ENCODE measurements at regions of chr3 and their contacts with region 1.

Region 1: DNA sequence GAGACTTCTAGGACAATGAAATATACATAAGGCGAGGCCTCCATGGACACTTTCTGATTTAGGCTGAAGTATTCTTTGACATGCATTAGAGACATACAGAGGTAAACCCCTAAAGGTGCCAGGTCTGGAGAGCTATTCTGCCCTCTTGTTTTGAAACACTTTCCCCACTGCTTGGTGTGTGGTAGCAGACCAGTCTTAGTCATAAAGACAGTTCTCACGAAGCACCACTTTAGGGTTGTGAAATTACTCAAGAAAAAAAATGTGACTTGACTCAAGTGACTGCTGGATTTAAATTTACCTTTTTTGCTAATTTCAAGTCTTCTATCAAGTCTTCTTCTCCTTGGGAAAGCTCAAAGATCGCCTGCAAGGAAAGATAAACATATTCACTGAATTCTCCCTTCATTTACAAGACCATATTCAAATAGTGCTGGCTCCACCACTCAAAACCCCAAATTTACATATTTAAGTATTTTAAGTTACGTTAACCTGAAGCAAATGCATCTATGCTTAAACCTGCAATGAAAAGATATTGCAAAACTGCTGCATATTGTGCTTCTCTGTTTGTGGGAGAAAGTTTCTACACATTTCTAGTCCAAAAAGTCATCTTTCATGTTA is 48.4 kb downstream of the ARHGEF3 start:
- DNase-seq: peak; percentile 29
- H3K4me3 Mint-ChIP-seq: no peak overlapping the region
- H3K27ac Mint-ChIP-seq: peak overlapping the region; percentile 40
- H3K4me1 Mint-ChIP-seq: peaks cover 57% of the 10 kb centered on the region
- H3K27me3 Mint-ChIP-seq: no peaks in the 10 kb centered on the region

Region 2: GRCh38 chr3:56725175-56725574 is 28.1 kb before region 1 on chr3:
- intact Hi-C with region 1: loop called (anchors 1 kb)
- DNase-seq: peak; percentile 69
- H3K4me3 Mint-ChIP-seq: peak overlapping the region; percentile 69
- H3K27ac Mint-ChIP-seq: peak overlapping the region; percentile 84
- H3K4me1 Mint-ChIP-seq: peaks cover 36% of the 10 kb centered on the region
- H3K27me3 Mint-ChIP-seq: no peaks in the 10 kb centered on the region

Region 3: DNA sequence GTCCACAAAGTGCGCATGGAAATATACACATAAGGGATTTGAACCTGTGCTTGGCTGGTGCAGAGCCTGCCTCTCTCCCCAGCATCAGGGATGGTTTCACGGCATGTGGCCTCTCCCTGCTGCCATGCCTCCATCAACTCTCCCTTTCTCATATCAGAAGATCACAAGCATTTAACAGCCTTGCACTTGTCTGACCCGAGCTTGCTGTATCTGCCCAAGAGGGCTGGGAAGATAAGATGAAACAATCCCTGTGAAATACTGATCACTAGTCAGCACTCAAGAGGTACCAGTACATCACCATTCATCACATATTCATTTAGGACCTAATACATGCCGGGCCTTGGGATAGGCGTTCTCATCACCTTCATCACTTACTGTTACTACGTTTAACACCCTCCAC is 156.0 kb after region 1 on chr3:
- intact Hi-C with region 1: no loop called
- DNase-seq: no peak
- H3K4me3 Mint-ChIP-seq: no peak overlapping the region
- H3K27ac Mint-ChIP-seq: peak overlapping the region; percentile 24
- H3K4me1 Mint-ChIP-seq: peaks cover 44% of the 10 kb centered on the region
- H3K27me3 Mint-ChIP-seq: no peaks in the 10 kb centered on the region